Right cardiac atrium (tissue), 5 donors: ENCODE measurements at regions of chr6 and their contacts with region 1.

Region 1: GRCh38 chr6:151681433-151682059 is 125.9 kb upstream of the ESR1 start:
- DNase-seq: peak in 1 of 3 donors; percentile 65
- ATAC-seq: peak; percentile 55 to 62
- H3K4me3 ChIP-seq: no peak overlapping the region
- H3K27ac ChIP-seq: no peak overlapping the region
- H3K4me1 ChIP-seq: no peaks in the 10 kb centered on the region
- H3K27me3 ChIP-seq: no peaks in the 10 kb centered on the region

Region 2: GRCh38 chr6:151813858-151814257 is 132.3 kb after region 1 on chr6:
- intact Hi-C with region 1: no loop called
- DNase-seq: no peak
- ATAC-seq: no peak
- H3K4me3 ChIP-seq: no peak overlapping the region
- H3K27ac ChIP-seq: no peak overlapping the region
- H3K4me1 ChIP-seq: no peaks in the 10 kb centered on the region
- H3K27me3 ChIP-seq: no peaks in the 10 kb centered on the region

Region 3: DNA sequence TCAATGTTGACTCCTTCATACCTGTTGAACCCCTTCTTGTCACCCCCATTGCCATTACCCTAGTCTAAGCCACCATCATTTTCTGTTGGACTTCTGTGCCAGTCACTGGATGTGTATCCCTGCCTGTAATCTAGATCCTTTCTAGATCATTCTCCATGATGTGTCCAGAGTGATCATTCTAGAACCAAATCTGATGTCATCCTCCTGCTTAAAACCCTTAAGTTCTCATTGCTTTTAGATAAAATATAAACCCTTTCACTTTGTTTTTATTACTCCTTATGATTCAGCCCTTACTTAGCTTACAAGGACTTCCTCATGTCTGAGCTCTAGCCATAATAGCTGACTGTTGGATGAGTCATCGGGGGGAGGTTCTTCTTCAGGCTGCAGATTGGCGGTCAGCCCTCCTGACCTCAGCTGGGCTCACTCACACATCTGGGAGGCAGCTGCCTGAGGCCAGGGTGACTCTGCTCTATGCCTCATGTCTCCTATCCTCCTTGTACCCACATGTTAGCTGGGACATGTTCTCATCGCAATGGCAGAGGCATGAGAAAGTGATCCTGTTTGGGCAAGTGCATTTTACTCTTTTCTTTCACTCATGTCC is 413.5 kb after region 1 on chr6:
- intact Hi-C with region 1: no loop called
- DNase-seq: peak; percentile 80 to 89 (median 82)
- ATAC-seq: peak; percentile 84 to 95
- H3K4me3 ChIP-seq: no peak overlapping the region
- H3K27ac ChIP-seq: peak overlapping the region; percentile 63
- H3K4me1 ChIP-seq: peaks cover 7% of the 10 kb centered on the region
- H3K27me3 ChIP-seq: no peaks in the 10 kb centered on the region

Region 4: DNA sequence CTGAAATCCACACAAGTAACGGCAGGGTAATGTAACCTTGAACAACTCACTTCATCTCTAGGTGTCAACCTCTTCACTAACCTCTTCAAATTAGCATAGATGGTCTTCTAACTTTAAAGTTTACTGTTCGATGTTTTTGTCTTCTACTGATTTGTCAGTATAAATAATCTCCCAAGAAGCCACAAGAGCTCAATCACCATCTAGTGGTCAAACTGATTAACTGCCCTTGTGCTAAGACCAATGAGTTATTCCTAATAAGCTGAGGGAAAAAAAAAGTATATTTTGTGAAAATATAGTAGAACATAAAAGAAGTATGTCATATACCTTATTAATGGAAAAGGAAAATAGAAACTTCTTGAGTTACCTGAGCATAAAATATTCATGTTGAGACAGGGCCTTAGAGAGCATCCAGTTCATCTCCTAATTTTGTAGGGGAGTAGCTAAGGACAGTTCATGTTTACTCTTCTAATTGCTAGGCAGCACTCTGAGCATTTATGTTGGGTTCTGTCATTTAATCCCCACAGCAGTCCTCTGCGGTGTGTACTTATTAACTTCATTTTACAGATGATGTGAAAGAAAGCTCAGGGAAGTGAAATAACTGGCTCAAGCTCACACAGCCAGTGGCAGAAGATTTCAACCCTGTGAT is 443.0 kb after region 1 on chr6:
- intact Hi-C with region 1: loop called in 1 of 4 experiments (anchors 10 kb)
- DNase-seq: no peak
- ATAC-seq: peak in 1 of 2 donors; percentile 48
- H3K4me3 ChIP-seq: no peak overlapping the region
- H3K27ac ChIP-seq: no peak overlapping the region
- H3K4me1 ChIP-seq: peaks cover 4% of the 10 kb centered on the region
- H3K27me3 ChIP-seq: no peaks in the 10 kb centered on the region